B cell (primary cell): ENCODE measurements at regions of chr15 and their contacts with region 1.

Region 1: DNA sequence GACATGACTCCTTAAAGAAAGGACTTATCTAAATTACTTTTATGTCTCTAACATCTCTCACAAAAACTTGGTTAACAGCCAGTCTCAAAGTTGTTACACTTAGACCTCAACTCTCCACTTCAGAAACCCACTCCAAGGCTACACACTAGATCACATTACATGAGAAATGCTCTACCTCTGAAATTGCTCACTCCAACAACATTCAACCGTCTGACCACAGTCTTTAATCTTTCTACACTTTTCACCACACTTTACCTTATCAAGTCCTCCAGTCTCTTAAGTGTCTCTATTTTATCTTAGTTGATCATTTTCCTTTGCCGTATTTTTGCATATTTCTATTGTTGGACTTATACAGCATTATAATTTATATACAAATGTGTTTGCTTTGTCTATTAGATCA is 5.8 kb downstream of the SLC12A6 start:
- DNase-seq: no peak
- ATAC-seq: no peak
- H3K4me3 ChIP-seq: no peak overlapping the region
- H3K4me3 Mint-ChIP-seq: peak overlapping the region; percentile 40
- H3K27ac ChIP-seq: peak overlapping the region; percentile 13 to 93
- H3K27ac Mint-ChIP-seq: peak overlapping the region; percentile 80
- H3K4me1 ChIP-seq: peaks cover 67 to 71% of the 10 kb centered on the region in 2 donors
- H3K4me1 Mint-ChIP-seq: peaks cover 73% of the 10 kb centered on the region
- H3K27me3 ChIP-seq: no peaks in the 10 kb centered on the region
- H3K27me3 Mint-ChIP-seq: no peaks in the 10 kb centered on the region
- CTCF ChIP-seq: no peak

Region 2: GRCh38 chr15:34241372-34242330 is 90.2 kb before region 1 on chr15:
- CTCF ChIA-PET with region 1: interaction called, 13 read pairs
- POLR2A ChIA-PET with region 1: no interaction called
- intact Hi-C with region 1: no loop called
- DNase-seq: peak; percentile 70
- ATAC-seq: peak; percentile 80
- H3K4me3 ChIP-seq: no peak overlapping the region
- H3K4me3 Mint-ChIP-seq: no peak overlapping the region
- H3K27ac ChIP-seq: no peak overlapping the region
- H3K27ac Mint-ChIP-seq: no peak overlapping the region
- H3K4me1 ChIP-seq: no peaks in the 10 kb centered on the region
- H3K4me1 Mint-ChIP-seq: no peaks in the 10 kb centered on the region
- H3K27me3 ChIP-seq: no peaks in the 10 kb centered on the region
- H3K27me3 Mint-ChIP-seq: no peaks in the 10 kb centered on the region
- CTCF ChIP-seq: peak; percentile 96

Region 3: GRCh38 chr15:34297059-34297458 is 34.8 kb before region 1 on chr15:
- CTCF ChIA-PET with region 1: no interaction called
- POLR2A ChIA-PET with region 1: no interaction called
- intact Hi-C with region 1: no loop called
- DNase-seq: no peak
- ATAC-seq: no peak
- H3K4me3 ChIP-seq: no peak overlapping the region
- H3K4me3 Mint-ChIP-seq: no peak overlapping the region
- H3K27ac ChIP-seq: no peak overlapping the region
- H3K27ac Mint-ChIP-seq: no peak overlapping the region
- H3K4me1 ChIP-seq: peaks cover 6 to 15% of the 10 kb centered on the region in 2 donors
- H3K4me1 Mint-ChIP-seq: peaks cover 43% of the 10 kb centered on the region
- H3K27me3 ChIP-seq: no peaks in the 10 kb centered on the region
- H3K27me3 Mint-ChIP-seq: no peaks in the 10 kb centered on the region
- CTCF ChIP-seq: no peak

Region 4: DNA sequence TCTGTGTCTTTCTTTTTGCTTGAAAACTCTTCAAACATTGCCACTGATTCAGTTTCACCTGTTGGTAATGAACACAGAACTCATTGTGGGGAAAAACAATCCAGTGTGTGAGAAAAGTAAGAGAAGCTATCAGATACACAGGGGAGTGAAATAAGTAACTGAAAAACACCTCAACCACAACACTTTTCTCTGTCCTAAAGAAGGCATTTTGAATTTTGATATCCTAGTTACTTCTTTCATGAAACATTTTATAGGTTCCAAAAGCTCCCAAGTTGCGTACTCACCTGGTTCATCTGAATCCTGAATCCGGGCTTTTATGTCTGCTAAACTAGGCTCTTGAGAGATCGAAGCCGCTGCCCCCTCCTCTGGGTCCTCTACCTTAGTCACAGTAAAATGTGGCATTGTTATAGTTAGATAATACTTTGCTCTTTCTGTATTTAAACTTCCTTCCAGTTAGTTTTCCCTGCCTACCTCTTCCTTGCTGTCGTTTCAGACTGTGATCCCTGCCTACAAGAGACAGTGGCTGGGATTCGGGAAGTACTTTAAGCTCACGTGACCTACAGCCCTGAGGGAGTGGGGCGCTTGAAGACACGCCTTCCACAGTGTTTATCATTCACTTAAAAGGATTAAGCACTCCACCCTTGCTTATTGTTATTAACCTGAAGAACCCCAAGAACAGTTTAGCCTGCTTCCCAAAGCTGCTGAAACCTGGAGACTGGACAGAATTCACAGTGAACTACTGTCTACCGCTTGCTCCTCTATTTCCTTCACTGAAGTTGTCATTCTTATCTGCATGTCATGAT is 13.3 kb before region 1 on chr15:
- CTCF ChIA-PET with region 1: interaction called, 6 read pairs
- POLR2A ChIA-PET with region 1: interaction called, 5 read pairs
- intact Hi-C with region 1: loop called (anchors 1 kb)
- DNase-seq: peak; percentile 52
- ATAC-seq: peak; percentile 77
- H3K4me3 ChIP-seq: peak overlapping the region; percentile 45 to 88 (median 70)
- H3K4me3 Mint-ChIP-seq: peak overlapping the region; percentile 89
- H3K27ac ChIP-seq: peak overlapping the region; percentile 41 to 81
- H3K27ac Mint-ChIP-seq: peak overlapping the region; percentile 76
- H3K4me1 ChIP-seq: peaks cover 24 to 30% of the 10 kb centered on the region in 2 donors
- H3K4me1 Mint-ChIP-seq: peaks cover 65% of the 10 kb centered on the region
- H3K27me3 ChIP-seq: no peaks in the 10 kb centered on the region
- H3K27me3 Mint-ChIP-seq: no peaks in the 10 kb centered on the region
- CTCF ChIP-seq: no peak

Region 5: DNA sequence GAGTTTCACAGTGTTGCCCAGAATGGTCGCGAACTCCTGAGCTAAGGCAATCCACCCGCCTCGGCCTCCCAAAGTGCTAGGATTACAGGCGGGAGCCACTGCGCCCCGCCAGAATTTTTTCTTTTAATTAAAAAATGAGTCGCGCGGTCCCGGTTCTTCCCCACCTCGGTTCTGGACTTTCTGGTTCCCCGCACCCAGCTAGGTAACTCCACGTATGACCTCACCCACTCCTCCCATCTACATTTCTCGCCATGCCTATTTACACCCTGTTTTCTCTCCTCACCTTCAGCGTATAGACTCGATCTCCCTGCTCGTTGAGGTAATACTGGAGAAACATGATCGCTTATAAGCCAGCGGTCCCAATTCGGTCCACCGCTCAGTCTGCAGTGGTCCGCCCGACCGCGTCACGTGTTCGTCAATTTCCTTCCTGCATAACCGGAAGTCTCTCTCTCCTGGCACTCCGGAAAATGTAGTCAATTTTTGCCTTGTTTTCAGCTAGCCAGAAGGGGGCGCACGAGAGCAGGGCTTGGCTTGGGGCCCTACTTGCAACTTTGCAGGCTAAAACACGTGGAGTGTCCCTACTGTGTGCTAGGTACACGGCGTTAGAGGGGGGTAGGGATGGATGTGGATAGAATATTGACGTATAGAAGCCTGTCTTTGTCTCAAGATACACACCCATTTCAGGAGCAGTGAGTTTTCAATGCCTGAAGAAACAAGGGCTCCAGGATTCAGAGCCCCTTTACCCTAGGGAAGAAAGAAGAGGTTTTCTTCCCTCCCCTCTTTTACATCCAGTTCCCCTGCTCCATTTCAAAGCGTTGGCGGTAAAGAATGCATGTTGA is 11.1 kb after region 1 on chr15 and contains the starts of genes NOP10 and NUTM1:
- CTCF ChIA-PET with region 1: interaction called, 9 read pairs
- POLR2A ChIA-PET with region 1: interaction called, 15 read pairs
- intact Hi-C with region 1: no loop called
- DNase-seq: peak; percentile 93
- ATAC-seq: peak; percentile 85
- H3K4me3 ChIP-seq: peak within 1 kb of the TSS; percentile 94 to 99 (median 98)
- H3K4me3 Mint-ChIP-seq: peak within 1 kb of the TSS; percentile 85
- H3K27ac ChIP-seq: peak within 1 kb of the TSS; percentile 79 to 81
- H3K27ac Mint-ChIP-seq: peak within 1 kb of the TSS; percentile 63
- H3K4me1 ChIP-seq: peaks cover 16 to 18% of the 10 kb centered on the region in 2 donors
- H3K4me1 Mint-ChIP-seq: peaks cover 20% of the 10 kb centered on the region
- H3K27me3 ChIP-seq: no peaks in the 10 kb centered on the region
- H3K27me3 Mint-ChIP-seq: no peaks in the 10 kb centered on the region
- CTCF ChIP-seq: peak; percentile 97
- total RNA-seq, gene NOP10: 65.6 and 68.2 TPM in 2 replicates
- total RNA-seq, gene NUTM1: not detected in 2 replicates